Left cardiac atrium (tissue), 4 donors: ENCODE measurements at regions of chr3 and their contacts with region 1.

Region 1: GRCh38 chr3:65412588-65412987 is 626.1 kb downstream of the MAGI1 start:
- DNase-seq: peak; percentile 46
- ATAC-seq: peak; percentile 86 to 92

Region 2: DNA sequence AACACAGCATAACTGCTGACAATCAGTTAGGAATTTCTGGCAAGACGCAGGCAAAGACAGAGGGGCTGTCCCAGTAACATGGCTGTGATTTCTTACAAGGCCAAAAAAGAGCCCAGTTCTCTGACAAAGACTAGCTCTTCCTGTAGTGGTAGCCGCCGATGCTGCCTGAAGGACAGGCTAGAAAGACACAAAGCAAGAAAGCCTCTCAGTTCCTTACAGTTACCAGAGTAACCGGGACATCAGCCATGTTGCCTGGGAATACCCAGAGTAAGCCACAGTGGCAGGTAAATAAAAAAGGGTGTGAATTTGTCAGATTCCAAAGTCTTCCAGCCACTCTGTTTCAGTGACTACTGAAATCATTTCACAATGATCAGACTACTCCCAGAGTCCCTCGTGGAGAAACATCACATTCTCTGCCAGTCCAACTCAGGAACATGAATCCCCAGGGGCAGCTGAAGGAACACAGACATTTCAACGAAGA is 231.2 kb before region 1 on chr3:
- intact Hi-C with region 1: no loop called
- DNase-seq: no peak
- ATAC-seq: peak; percentile 41 to 90

Region 3: DNA sequence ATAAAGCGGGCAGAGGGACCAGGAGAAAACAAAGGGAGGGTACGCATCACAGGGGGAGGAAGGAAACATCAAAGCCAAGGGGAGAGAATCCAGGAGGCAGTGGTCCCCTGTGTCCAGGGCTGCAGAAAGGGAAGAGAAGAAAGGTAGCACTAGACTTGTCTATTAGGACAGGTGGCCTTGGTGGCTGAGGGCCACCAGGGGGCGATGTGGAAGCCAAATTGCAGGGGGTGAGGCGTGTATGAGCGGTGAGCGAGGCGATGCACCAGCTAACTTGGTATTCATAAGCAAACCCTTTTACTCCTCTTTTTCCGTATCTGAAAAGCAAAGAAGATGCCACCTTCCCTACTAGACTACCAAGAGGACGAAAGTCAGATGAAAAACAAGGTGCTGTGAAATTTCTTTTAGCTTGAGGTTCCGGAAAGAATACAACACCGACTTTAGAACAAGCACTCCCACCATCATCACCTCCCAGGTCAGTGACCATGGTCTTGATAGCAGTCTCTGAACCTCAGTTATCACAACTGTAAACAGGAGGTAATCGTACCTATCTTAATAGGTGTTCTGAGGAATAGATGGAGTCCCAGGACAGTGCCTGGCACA is 70.4 kb before region 1 on chr3:
- intact Hi-C with region 1: loop called in 1 of 2 experiments (anchors 10 kb)
- DNase-seq: peak; percentile 50
- ATAC-seq: peak in 1 of 2 donors; percentile 61